Mammary epithelial cell (primary cell): ENCODE measurements at regions of chr17 and their contacts with region 1.

Region 1: GRCh38 chr17:43791589-43791988 is 11.4 kb downstream of the CFAP97D1 start:
- DNase-seq: peak; percentile 72
- H3K4me3 ChIP-seq: no peak overlapping the region
- H3K27ac ChIP-seq: no peak overlapping the region
- H3K4me1 ChIP-seq: peaks cover 16% of the 10 kb centered on the region
- H3K27me3 ChIP-seq: no peaks in the 10 kb centered on the region
- CTCF ChIP-seq: no peak

Region 2: GRCh38 chr17:43840814-43841213 is 49.2 kb after region 1 on chr17:
- CTCF ChIA-PET with region 1: interaction called, 26 read pairs
- dilution Hi-C with region 1: no loop called
- in situ Hi-C with region 1: loop called in 1 of 2 experiments (anchors 5 kb)
- intact Hi-C with region 1: loop called (anchors 1 kb)
- DNase-seq: no peak
- H3K4me3 ChIP-seq: no peak overlapping the region
- H3K27ac ChIP-seq: no peak overlapping the region
- H3K4me1 ChIP-seq: peaks cover 31% of the 10 kb centered on the region
- H3K27me3 ChIP-seq: no peaks in the 10 kb centered on the region
- CTCF ChIP-seq: no peak

Region 3: GRCh38 chr17:43846221-43846712 is 54.7 kb after region 1 on chr17:
- CTCF ChIA-PET with region 1: interaction called, 26 read pairs
- dilution Hi-C with region 1: no loop called
- in situ Hi-C with region 1: loop called (anchors 5 kb)
- intact Hi-C with region 1: loop called (anchors 1 kb)
- DNase-seq: peak; percentile 46
- H3K4me3 ChIP-seq: no peak overlapping the region
- H3K27ac ChIP-seq: no peak overlapping the region
- H3K4me1 ChIP-seq: peaks cover 18% of the 10 kb centered on the region
- H3K27me3 ChIP-seq: no peaks in the 10 kb centered on the region
- CTCF ChIP-seq: peak; percentile 97 to 100

Region 4: DNA sequence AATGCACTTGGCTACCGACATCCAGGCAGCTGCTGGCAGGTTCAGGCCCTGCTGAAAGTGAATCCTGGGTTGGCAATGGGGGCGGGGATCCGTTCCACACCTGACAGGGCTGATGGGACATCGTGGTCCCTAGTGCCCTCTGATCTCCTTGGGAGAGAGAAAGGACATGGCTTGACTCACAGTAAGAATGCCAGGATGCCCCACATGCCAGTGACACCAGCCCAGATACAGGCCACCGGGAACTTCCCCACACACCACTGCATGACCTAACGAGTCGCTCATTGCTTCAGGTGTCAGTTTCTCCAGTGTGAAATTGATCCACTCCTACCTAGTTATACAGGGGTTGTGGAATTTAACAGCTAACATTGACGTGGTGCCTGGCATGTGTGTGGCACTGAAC is 62.9 kb after region 1 on chr17:
- CTCF ChIA-PET with region 1: interaction called, 5 read pairs
- dilution Hi-C with region 1: no loop called
- in situ Hi-C with region 1: loop called in 1 of 2 experiments (anchors 5 kb)
- intact Hi-C with region 1: no loop called
- DNase-seq: no peak
- H3K4me3 ChIP-seq: no peak overlapping the region
- H3K27ac ChIP-seq: no peak overlapping the region
- H3K4me1 ChIP-seq: no peaks in the 10 kb centered on the region
- H3K27me3 ChIP-seq: no peaks in the 10 kb centered on the region
- CTCF ChIP-seq: no peak

Region 5: GRCh38 chr17:43891851-43892646 is 100.5 kb after region 1 on chr17:
- CTCF ChIA-PET with region 1: no interaction called
- dilution Hi-C with region 1: no loop called
- in situ Hi-C with region 1: no loop called
- intact Hi-C with region 1: no loop called
- DNase-seq: no peak
- H3K4me3 ChIP-seq: no peak overlapping the region
- H3K27ac ChIP-seq: no peak overlapping the region
- H3K4me1 ChIP-seq: no peaks in the 10 kb centered on the region
- H3K27me3 ChIP-seq: no peaks in the 10 kb centered on the region
- CTCF ChIP-seq: no peak

Region 6: DNA sequence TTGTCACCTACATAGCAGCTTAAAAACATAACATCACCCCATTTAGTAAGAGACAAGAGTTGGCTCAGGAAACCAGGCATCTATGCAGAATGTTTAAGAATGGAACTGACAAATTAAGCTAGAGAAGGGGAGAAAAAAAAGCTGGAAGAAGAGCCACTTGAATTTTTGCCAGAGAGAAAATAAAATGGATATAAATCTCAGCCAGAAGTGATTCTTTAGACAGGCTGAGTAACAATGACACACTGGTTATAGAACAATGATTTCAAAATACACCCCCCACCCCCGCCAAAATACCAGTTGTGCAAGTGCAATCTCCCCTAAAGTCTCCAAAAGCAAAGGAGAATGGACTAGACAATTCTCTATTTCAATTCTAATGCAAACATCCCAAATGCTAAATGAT is 252.5 kb after region 1 on chr17:
- CTCF ChIA-PET with region 1: no interaction called
- dilution Hi-C with region 1: no loop called
- in situ Hi-C with region 1: no loop called
- intact Hi-C with region 1: loop called (anchors 1 kb)
- DNase-seq: peak; percentile 33
- H3K4me3 ChIP-seq: no peak overlapping the region
- H3K27ac ChIP-seq: no peak overlapping the region
- H3K4me1 ChIP-seq: peaks cover 27% of the 10 kb centered on the region
- H3K27me3 ChIP-seq: no peaks in the 10 kb centered on the region
- CTCF ChIP-seq: no peak